Left cardiac atrium (tissue), 4 donors: ENCODE measurements at regions of chr15 and their contacts with region 1.

Region 1: DNA sequence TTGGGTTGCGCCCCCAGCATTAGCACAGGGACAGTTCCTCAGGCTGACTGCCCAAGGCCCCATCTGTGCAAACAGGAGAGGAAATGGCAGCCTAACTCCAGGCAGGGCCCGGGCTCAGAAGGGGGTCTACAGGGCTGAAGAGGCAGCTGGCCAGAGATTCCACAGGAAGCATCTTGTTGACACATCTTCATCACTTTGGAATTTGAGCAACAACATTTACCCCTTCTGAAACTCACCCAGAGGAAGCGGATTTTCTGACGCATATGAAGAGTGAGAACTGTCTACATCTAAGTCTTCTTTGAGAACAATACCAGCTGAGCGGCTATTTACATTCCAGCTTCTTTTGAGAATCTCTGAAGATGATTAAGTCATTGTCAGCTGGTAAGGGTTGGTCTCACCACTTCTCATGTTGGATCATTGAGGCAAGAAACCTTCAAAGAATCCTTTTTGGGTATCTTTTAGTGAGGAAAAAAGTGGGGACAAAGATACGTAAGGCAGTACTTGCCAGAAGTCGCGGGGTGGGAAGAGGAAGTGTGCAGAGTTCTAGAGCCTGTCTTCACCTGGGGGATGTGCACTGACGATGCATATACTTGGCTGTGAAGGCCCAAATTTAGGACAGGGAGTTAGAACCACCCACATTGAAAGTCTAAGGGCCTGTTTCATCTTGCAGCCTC is 25.4 kb upstream of the SRP14 start:
- DNase-seq: no peak
- ATAC-seq: no peak

Region 2: GRCh38 chr15:38817427-38818156 is 1246.8 kb before region 1 on chr15:
- intact Hi-C with region 1: no loop called
- DNase-seq: peak; percentile 81
- ATAC-seq: peak; percentile 89 to 93

Region 3: GRCh38 chr15:40155270-40155910 is 91.0 kb after region 1 on chr15:
- intact Hi-C with region 1: loop called in 1 of 2 experiments (anchors 5 kb)
- DNase-seq: no peak
- ATAC-seq: no peak

Region 4: DNA sequence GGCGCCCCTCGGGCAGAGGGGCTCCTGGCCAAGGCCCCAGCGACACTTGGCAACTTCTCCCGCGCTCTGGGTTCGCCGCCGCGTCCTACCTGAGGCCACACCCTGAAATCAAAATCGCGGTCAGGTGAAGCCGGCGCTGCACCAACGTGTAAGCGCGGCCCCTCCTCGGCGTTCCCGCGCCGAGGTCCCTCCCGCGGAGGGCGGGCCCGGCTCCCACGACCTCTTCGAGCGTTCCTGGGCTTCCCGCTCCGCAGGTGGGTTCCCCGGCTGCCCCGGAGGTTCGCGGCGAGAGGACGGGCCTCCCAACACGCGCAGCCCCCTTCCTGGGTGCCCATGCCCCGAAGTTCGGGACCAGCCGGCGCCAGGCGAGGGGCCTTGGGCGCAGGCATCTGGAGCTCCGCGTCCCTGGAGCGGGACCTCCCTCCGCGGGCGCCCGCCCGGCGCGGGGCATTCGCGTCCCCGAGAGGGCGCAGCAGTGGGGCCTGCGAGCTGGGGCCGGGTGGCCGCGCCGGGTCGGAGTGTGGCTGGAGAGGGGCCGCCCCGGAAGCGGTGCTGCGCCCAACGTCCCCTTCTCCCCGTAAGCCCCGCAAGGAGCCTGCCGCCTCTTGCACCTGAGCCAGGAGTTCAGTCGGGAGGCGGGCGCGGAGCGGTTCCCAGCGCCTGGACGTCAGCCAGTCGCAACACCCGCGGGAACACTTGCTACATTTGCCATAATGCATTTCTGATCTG is 188.2 kb after region 1 on chr15:
- intact Hi-C with region 1: no loop called
- DNase-seq: no peak
- ATAC-seq: peak; percentile 56 to 63

Region 5: DNA sequence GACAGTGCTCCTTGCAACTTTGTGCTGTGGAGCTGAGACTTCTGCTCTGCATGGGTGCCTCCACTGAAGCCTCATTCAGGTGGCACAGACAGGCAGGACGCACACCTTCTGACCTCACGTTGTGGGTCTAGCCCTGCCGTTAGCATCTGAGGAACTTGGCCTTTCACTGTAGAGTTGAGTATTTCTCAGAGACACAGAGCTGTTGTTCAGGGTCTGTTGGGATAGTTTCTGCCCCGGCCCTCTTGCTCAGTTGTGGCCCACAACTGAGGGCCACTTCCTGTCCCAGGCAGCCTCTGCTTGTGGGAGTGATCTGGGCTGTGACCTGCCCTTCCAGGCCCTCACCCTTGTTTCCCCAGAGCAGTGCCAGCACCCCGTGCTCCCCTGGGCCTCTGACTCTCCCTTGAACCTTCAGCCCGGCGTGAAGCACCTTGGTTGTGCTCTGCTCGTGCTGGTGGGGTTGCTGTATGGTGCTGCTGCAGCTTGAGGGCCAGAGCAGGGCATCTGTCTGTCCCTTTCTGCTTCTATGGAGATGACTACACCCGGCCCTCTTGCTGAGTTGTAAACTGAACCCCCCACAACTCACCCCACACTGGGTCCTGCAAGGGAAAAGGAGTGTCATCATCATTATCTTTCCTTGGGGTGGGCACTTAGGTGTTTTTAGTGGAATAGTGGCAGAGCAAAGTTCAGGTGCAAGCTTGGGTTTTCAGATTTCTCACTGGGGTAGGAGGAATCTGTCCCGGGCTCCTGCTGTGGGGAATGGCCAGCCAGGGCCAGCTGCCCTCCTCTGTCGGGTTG is 388.1 kb after region 1 on chr15:
- intact Hi-C with region 1: no loop called
- DNase-seq: no peak
- ATAC-seq: no peak